Dorsolateral prefrontal cortex (tissue), 120 donors: ENCODE measurements at regions of chrX and their contacts with region 1.

Region 1: GRCh38 chrX:55160685-55161552 is 59.2 kb upstream of the PAGE5 start:
- DNase-seq: peak; percentile 75 to 92 (median 88)
- H3K4me3 ChIP-seq: peak overlapping the region; percentile 36 to 75 (median 66)
- H3K27ac ChIP-seq: peak overlapping the region; percentile 29 to 96 (median 90)
- H3K27me3 ChIP-seq: peaks cover 0 to 43% (median 8%) of the 10 kb centered on the region in 45 donors
- CTCF ChIP-seq: peak in 51 of 56 donors; percentile 10 to 69 (median 46)

Region 2: GRCh38 chrX:55196688-55197087 is 35.8 kb after region 1 on chrX:
- intact Hi-C with region 1: no loop called
- DNase-seq: no peak
- H3K4me3 ChIP-seq: no peak overlapping the region
- H3K27ac ChIP-seq: no peak overlapping the region
- H3K27me3 ChIP-seq: peaks cover 0 to 32% (median 3%) of the 10 kb centered on the region in 45 donors
- CTCF ChIP-seq: no peak

Region 3: GRCh38 chrX:55717521-55718497 is 556.9 kb after region 1 on chrX and contains the start of gene RRAGB:
- intact Hi-C with region 1: loop called (anchors 10 kb)
- DNase-seq: peak; percentile 86 to 97 (median 95)
- H3K4me3 ChIP-seq: peak within 1 kb of the TSS; percentile 46 to 84 (median 69)
- H3K27ac ChIP-seq: peak within 1 kb of the TSS in 58 of 59 donors; percentile 4 to 92 (median 80)
- H3K27me3 ChIP-seq: peaks cover 0 to 46% (median 6%) of the 10 kb centered on the region in 45 donors
- CTCF ChIP-seq: peak in 49 of 56 donors; percentile 9 to 53 (median 36)
- total RNA-seq, gene RRAGB: 22.0 to 53.4 (median 33.6) TPM

Region 4: DNA sequence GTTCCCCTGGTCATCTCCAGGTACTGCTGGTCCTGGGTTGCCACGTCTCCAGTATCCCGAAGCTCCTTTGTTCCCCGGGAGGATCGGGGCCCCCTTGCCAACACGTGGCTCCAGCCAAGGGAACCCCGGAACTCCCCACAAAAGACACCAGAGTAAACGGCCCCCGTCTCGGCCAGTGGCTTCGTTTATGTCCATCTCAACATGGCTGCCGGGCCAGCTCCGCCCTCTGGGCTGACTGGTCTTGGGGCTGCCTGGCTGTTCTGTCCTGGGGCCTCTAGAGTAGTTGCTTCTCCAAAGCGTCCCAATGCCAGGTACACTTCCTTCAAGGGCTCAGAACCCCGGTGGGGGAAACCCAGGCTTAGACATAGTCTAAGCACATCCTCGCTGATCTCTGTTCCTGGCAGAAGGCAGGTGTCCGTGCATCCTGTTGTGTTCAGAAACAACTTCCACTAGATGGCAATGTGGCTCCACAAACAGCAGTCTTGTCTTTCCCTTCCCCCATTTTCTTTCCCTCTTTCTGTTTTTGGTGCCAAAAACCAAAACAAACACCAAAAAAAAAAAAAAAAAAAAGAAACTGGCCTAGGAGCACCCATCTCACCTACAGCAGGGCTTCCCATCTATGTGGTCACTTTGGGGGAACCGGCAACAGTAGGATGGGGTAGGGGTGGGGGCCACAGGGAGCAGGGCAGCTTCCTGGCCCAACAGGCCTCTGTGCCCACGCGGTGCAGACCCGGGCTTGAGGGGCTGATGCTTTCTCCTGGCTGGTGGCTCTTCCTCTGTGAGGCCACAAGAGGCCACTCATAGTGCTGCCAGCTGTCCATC is 1603.4 kb after region 1 on chrX:
- intact Hi-C with region 1: loop called in 1 of 2 experiments (anchors 10 kb)
- DNase-seq: peak; percentile 53 to 89 (median 78)
- H3K4me3 ChIP-seq: peak overlapping the region in 56 of 59 donors; percentile 15 to 88 (median 64)
- H3K27ac ChIP-seq: peak overlapping the region; percentile 49 to 100 (median 99)
- H3K27me3 ChIP-seq: peaks cover 0 to 16% (median 0%) of the 10 kb centered on the region in 45 donors
- CTCF ChIP-seq: peak; percentile 13 to 86 (median 73)